Gastrocnemius medialis (tissue), 4 donors: ENCODE measurements at regions of chr11 and their contacts with region 1.

Region 1: GRCh38 chr11:106827687-106828086 is 190.6 kb downstream of the GUCY1A2 start:
- DNase-seq: no peak
- ATAC-seq: no peak
- H3K4me3 ChIP-seq: no peak overlapping the region
- H3K27ac ChIP-seq: no peak overlapping the region
- H3K4me1 ChIP-seq: no peaks in the 10 kb centered on the region
- H3K27me3 ChIP-seq: no peaks in the 10 kb centered on the region
- CTCF ChIP-seq: no peak
- POLR2A ChIP-seq: no peak

Region 2: DNA sequence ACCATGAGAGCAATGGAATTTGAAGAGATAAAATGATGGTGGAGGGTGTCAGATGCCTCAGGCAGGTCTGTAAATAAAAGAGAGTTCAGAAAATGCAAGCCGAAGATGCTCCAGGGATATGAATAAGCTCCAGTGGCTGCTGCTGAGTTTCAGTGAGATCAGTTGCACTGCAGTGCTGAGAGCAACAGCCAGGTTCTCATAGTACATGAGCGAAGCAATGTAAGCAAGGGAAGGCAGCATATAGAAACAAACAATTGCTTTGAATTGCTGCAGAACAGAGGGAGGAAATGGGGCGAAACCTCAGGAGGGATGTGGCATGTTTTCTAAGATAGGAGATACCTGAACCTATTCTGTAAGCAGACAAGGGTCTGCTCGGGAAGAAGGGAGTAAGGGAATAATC is 380.7 kb before region 1 on chr11:
- in situ Hi-C with region 1: no loop called
- intact Hi-C with region 1: no loop called
- DNase-seq: no peak
- ATAC-seq: no peak
- H3K4me3 ChIP-seq: no peak overlapping the region
- H3K27ac ChIP-seq: no peak overlapping the region
- H3K4me1 ChIP-seq: no peaks in the 10 kb centered on the region
- H3K27me3 ChIP-seq: no peaks in the 10 kb centered on the region
- CTCF ChIP-seq: no peak
- POLR2A ChIP-seq: no peak

Region 3: GRCh38 chr11:106466521-106467080 is 361.1 kb before region 1 on chr11:
- in situ Hi-C with region 1: no loop called
- intact Hi-C with region 1: no loop called
- DNase-seq: no peak
- ATAC-seq: no peak
- H3K4me3 ChIP-seq: no peak overlapping the region
- H3K27ac ChIP-seq: no peak overlapping the region
- H3K4me1 ChIP-seq: no peaks in the 10 kb centered on the region
- H3K27me3 ChIP-seq: no peaks in the 10 kb centered on the region
- CTCF ChIP-seq: no peak
- POLR2A ChIP-seq: no peak

Region 4: DNA sequence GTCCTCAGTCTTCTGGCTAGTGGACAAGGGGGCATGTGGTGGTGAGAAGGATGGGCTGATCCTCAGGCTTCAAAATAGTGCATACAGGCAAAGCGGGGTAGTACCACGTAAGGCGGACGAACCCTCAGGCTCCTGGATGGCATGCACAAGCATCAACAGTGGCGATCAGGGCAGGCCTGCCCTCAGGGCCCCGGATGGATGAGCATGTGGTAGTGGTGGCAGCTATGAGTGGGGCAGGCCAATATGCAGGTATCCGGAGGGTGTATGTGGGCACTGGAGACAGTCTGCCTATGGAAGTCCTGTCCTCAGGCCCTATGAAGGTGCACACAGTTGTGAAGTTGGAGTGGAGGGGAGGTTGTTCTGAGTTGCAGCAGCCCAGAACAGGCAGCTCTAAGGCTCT is 26.8 kb after region 1 on chr11:
- in situ Hi-C with region 1: no loop called
- intact Hi-C with region 1: no loop called
- DNase-seq: no peak
- ATAC-seq: no peak
- H3K4me3 ChIP-seq: no peak overlapping the region
- H3K27ac ChIP-seq: no peak overlapping the region
- H3K4me1 ChIP-seq: no peaks in the 10 kb centered on the region
- H3K27me3 ChIP-seq: no peaks in the 10 kb centered on the region
- CTCF ChIP-seq: no peak
- POLR2A ChIP-seq: no peak

Region 5: DNA sequence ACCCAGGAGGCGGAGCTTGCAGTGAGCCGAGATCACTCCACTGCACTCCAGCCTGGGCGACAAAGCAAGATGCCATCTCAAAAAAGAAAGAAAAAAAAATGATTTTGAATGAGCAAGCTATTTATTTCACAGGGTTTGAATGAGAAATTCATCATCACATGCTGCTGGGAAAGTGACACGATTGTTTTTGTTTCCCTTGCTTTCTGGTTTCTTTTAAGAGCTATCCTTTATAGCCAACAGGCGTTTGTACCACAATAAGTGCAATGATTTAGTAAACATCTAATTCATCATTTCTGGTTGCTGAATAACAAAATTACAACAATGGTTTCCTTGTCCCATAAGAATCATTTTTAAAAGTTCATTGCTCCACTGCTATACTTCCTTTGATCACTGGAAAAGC is 60.7 kb after region 1 on chr11:
- in situ Hi-C with region 1: no loop called
- intact Hi-C with region 1: no loop called
- DNase-seq: no peak
- ATAC-seq: no peak
- H3K4me3 ChIP-seq: no peak overlapping the region
- H3K27ac ChIP-seq: no peak overlapping the region
- H3K4me1 ChIP-seq: no peaks in the 10 kb centered on the region
- H3K27me3 ChIP-seq: no peaks in the 10 kb centered on the region
- CTCF ChIP-seq: no peak
- POLR2A ChIP-seq: no peak

Region 6: DNA sequence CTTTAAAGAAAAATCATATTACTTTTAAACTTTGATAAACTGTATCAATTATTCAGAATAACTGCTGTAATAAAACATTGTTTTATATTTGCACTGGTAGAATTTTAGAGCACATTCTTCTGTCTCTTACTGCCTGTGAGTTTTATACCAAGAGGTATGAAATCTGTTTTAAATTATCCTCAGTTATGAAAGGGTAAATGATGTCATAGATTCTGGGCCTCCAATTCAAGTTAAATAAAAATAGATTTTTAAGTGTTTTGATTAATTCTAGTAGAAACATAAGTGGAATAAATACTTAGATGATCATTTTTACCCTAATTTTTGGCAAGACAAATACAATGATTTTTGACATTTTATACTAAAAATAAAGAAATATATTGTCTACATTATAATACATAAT is 97.6 kb after region 1 on chr11:
- in situ Hi-C with region 1: loop called in 1 of 4 experiments (anchors 25 kb)
- intact Hi-C with region 1: no loop called
- DNase-seq: no peak
- ATAC-seq: no peak
- H3K4me3 ChIP-seq: no peak overlapping the region
- H3K27ac ChIP-seq: no peak overlapping the region
- H3K4me1 ChIP-seq: no peaks in the 10 kb centered on the region
- H3K27me3 ChIP-seq: no peaks in the 10 kb centered on the region
- CTCF ChIP-seq: no peak
- POLR2A ChIP-seq: no peak